Activated CD4-positive, alpha-beta T cell treated with anti-CD3 and anti-CD28 coated beads, Interleukin-2, amount 10 ng/mL, durations not matched to agents 7 days and 5 days (primary cell): ENCODE measurements at regions of chr7 and their contacts with region 1.

Region 1: GRCh38 chr7:150553163-150553562 is 14.0 kb upstream of the GIMAP4 start:
- DNase-seq: no peak
- H3K4me3 Mint-ChIP-seq: no peak overlapping the region
- H3K27ac Mint-ChIP-seq: no peak overlapping the region
- H3K4me1 Mint-ChIP-seq: peaks cover 53% of the 10 kb centered on the region
- H3K27me3 Mint-ChIP-seq: no peaks in the 10 kb centered on the region

Region 2: DNA sequence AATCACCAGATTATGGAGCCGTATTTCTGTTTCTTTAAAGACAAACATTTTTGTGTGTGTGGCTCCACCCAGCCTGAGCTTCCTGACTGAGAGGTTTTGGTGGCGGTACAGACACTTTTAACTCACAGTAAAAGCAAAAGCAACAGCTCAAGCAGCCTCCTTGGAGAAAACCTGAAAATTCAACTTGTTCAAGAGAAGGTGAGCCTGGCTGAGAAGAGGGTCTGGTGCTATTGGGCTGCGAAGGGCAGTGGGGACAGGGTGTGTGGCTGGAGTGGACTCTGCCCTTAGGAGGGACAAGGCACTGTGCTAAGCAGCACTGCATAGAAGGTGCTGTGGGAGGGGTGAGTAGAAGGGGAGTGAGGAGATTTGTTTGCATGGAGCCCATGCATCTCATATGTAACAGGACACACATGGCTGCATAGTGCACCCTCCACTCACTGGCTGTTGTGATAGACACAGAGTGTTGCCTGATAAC is 38.4 kb before region 1 on chr7 and contains the start of gene GIMAP7:
- CTCF ChIA-PET with region 1: no interaction called
- POLR2A ChIA-PET with region 1: no interaction called
- DNase-seq: peak; percentile 86
- H3K4me3 Mint-ChIP-seq: peak within 1 kb of the TSS; percentile 98
- H3K27ac Mint-ChIP-seq: peak within 1 kb of the TSS; percentile 97
- H3K4me1 Mint-ChIP-seq: peaks cover 48% of the 10 kb centered on the region
- H3K27me3 Mint-ChIP-seq: no peaks in the 10 kb centered on the region
- total RNA-seq, gene GIMAP7: 239 to 244 TPM

Region 3: DNA sequence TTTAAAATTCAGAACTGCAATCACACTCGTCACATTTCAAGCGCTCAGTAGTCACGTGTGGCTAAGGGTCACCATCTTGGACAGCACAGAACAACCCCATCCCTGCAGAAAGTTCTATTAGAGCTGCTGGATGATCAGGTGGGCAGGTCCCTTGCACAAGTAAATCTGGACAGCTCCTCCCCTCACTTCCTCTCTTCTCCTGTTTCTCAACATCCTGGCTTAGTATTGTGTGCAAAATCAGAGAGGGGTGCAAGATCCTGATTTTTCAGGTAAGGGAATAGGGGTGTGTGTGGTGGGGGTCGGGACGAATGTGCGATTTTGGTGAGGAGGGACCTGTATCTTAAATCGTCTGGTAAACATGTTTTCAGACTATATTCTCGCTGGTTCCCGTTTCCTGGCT is 14.0 kb after region 1 on chr7 and contains the start of gene GIMAP4:
- CTCF ChIA-PET with region 1: interaction called, 11 read pairs
- POLR2A ChIA-PET with region 1: interaction called, 3 read pairs
- DNase-seq: peak; percentile 49
- H3K4me3 Mint-ChIP-seq: peak within 1 kb of the TSS; percentile 92
- H3K27ac Mint-ChIP-seq: peak within 1 kb of the TSS; percentile 94
- H3K4me1 Mint-ChIP-seq: peaks cover 73% of the 10 kb centered on the region
- H3K27me3 Mint-ChIP-seq: no peaks in the 10 kb centered on the region
- total RNA-seq, gene GIMAP4: 311 to 335 TPM